ENCODE measurements at regions of chr3 and their contacts with region 1.

Region 1: GRCh38 chr3:136675150-136675858 is 76.9 kb downstream of the STAG1 start:
- DNase-seq: no peak
- CTCF ChIP-seq: no peak

Region 2: DNA sequence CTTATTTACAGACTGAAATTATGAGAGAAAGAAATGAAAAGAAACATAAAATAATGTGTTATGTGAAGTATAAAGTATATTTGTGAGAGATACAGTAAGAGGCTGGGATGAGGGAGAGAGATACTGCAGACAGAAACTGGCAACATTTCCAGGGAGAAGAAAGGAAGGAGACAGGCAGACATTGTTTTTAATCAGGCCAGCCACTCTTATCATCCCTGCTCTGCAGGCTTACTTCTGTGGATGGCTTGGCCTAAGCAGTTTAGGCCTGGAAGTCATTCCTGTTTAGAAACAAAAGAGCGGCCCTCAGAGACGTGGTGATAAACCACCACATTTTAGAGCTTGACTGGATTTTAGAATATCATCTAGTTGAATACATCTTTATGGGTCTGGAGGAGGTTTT is 412.7 kb before region 1 on chr3:
- CTCF ChIA-PET with region 1: no interaction called
- POLR2A ChIA-PET with region 1: no interaction called
- DNase-seq: no peak
- CTCF ChIP-seq: no peak

Region 3: GRCh38 chr3:136685882-136686281 is 10.6 kb after region 1 on chr3:
- CTCF ChIA-PET with region 1: interaction called, 11 read pairs
- POLR2A ChIA-PET with region 1: no interaction called
- DNase-seq: no peak
- CTCF ChIP-seq: no peak

Measured in GM10248 (cell line).